Calu3 (cell line): ENCODE measurements at regions of chr6 and their contacts with region 1.

Region 1: DNA sequence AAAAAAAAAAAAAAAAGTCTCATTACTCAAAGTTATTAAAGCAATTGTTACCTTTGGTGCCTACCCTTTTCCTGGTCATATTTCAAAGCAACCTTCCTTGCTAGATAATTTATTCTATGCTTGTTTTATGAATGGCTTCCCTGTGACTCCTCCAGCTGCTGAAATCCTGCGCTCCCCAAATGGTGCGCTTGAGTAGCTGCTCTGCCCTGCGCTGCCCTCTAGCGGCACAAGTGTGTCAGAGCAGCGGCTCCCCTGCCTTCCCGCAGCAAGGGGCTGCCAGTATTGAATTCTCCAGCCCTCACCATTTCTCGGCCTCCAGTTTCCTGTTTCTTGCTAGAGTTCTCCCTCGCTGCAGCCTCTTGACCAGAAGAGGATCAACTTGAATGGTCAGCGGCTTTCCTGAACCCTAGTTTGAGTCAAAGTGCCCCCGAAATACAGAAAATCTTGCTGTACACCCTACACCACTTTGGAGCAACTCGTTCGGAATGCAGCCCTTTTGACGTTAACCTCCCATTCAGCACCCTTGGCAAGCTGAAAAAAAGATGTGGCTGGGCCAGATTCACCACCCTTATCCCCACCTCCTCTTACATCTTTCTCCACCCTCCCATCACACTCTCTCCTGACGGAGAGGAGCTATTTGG is 60.4 kb upstream of the KLHL31 start:
- DNase-seq: peak; percentile 83
- H3K4me3 Mint-ChIP-seq: peak overlapping the region; percentile 47
- H3K27ac Mint-ChIP-seq: peak overlapping the region; percentile 54
- H3K4me1 Mint-ChIP-seq: peaks cover 38% of the 10 kb centered on the region
- H3K27me3 Mint-ChIP-seq: no peaks in the 10 kb centered on the region
- CTCF ChIP-seq: peak; percentile 92

Region 2: DNA sequence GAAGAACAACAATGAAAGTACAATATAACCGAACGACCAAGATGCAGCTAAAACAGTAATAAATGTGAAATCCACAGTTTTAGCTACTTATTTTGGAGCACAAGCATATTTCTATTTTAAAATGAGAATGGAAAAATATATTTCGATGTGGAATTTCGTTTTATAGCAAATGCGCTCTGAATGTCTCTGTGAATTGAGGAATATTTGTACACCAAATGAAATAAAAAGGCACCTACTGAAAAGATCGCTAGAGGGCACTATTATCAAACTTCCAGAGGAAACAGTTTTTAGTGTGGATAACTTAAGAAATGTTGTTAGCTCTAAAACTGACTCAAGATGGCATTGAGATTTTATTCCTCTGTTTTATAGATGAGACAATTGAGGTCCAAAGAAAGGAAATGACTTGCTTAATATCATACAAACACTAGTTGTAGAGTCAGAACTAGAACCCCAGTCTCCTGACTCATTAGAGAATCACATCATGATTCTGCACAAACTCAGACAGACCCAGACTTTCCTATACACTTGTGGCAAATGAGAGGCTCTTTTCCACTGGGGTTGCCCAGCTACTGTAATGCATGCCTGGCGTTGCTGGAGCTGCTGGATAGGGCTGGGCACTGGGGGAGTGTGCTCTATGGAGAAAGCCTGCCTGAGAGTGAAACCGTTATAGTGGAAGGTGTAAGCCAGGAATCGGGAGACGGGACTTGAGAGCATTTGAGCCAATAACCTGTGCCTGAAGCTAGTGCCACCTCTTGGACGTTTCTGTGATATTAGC is 232.9 kb before region 1 on chr6:
- CTCF ChIA-PET with region 1: interaction called, 30 read pairs
- intact Hi-C with region 1: loop called (anchors 1 kb)
- DNase-seq: no peak
- H3K4me3 Mint-ChIP-seq: peak overlapping the region; percentile 30
- H3K27ac Mint-ChIP-seq: no peak overlapping the region
- H3K4me1 Mint-ChIP-seq: peaks cover 19% of the 10 kb centered on the region
- H3K27me3 Mint-ChIP-seq: no peaks in the 10 kb centered on the region
- CTCF ChIP-seq: peak; percentile 22

Region 3: DNA sequence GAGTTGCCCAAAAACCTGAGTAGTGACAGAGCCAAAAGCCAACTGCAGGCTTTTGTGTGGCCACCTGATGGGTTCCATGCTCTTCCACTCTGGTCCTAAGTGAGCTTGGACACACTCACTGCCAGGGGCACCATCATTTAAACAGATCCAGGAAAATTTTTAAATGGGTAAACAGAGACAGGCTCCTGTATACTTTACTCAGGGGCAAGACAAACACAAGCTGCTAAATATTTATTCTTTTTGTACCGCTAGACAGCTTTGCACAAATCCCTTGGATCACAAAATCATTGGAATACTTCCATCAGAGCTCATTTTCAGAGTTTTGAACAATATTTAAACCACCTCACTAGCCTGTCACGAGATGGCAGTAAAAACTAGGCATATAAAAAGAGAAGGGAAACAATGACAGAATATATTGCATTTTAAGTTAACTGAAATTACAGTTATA is 212.4 kb before region 1 on chr6:
- CTCF ChIA-PET with region 1: interaction called, 7 read pairs
- intact Hi-C with region 1: loop called (anchors 5 kb)
- DNase-seq: no peak
- H3K4me3 Mint-ChIP-seq: peak overlapping the region; percentile 39
- H3K27ac Mint-ChIP-seq: peak overlapping the region; percentile 23
- H3K4me1 Mint-ChIP-seq: peaks cover 68% of the 10 kb centered on the region
- H3K27me3 Mint-ChIP-seq: no peaks in the 10 kb centered on the region
- CTCF ChIP-seq: no peak

Region 4: DNA sequence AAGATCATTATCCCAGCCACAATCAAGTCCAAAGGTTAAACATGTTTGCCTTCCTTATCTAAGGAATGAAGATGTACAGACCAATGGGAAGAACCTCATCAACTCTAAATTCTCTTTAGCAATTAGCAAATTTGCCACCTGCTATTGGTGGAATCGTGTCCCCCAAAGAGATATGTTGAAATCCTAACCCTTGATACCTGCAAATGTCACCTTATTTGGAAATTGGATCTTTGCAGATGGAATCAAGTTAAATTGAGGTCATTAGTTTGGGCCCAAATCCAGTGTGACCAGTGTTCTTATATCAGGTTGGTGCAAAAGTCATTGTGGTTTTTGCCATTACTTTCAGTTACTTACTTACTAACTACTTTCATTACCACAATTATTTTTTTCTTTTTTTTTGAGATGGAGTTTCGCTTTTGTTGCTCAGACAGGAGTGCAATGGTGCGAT is 91.7 kb before region 1 on chr6:
- CTCF ChIA-PET with region 1: no interaction called
- intact Hi-C with region 1: no loop called
- DNase-seq: no peak
- H3K4me3 Mint-ChIP-seq: no peak overlapping the region
- H3K27ac Mint-ChIP-seq: no peak overlapping the region
- H3K4me1 Mint-ChIP-seq: peaks cover 23% of the 10 kb centered on the region
- H3K27me3 Mint-ChIP-seq: no peaks in the 10 kb centered on the region
- CTCF ChIP-seq: no peak

Region 5: GRCh38 chr6:53679446-53679933 is 46.4 kb before region 1 on chr6:
- CTCF ChIA-PET with region 1: interaction called, 4 read pairs
- intact Hi-C with region 1: loop called (anchors 1 kb)
- DNase-seq: peak; percentile 34
- H3K4me3 Mint-ChIP-seq: no peak overlapping the region
- H3K27ac Mint-ChIP-seq: peak overlapping the region; percentile 31
- H3K4me1 Mint-ChIP-seq: peaks cover 8% of the 10 kb centered on the region
- H3K27me3 Mint-ChIP-seq: no peaks in the 10 kb centered on the region
- CTCF ChIP-seq: peak; percentile 30

Region 6: DNA sequence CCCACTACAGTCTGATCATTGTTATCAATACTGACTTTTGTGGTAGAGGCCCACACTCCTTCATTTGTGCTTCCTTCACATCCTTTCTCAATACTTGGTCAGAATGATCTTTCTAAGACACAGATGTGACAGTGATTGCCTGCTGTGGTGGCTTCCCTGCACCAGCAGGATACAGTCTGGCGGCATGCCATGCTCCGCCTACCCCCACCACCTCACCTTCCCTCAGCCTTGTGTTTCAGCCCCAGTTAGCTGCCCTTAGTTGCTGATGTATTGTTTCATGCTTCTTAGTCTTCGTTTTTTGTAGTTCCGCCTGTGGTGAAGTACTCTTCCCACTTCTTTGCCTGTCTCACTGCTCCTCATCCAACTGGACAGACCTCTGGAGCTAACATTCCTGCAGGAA is 79.8 kb after region 1 on chr6:
- CTCF ChIA-PET with region 1: no interaction called
- intact Hi-C with region 1: no loop called
- DNase-seq: no peak
- H3K4me3 Mint-ChIP-seq: no peak overlapping the region
- H3K27ac Mint-ChIP-seq: no peak overlapping the region
- H3K4me1 Mint-ChIP-seq: peaks cover 19% of the 10 kb centered on the region
- H3K27me3 Mint-ChIP-seq: no peaks in the 10 kb centered on the region
- CTCF ChIP-seq: no peak

Region 7: DNA sequence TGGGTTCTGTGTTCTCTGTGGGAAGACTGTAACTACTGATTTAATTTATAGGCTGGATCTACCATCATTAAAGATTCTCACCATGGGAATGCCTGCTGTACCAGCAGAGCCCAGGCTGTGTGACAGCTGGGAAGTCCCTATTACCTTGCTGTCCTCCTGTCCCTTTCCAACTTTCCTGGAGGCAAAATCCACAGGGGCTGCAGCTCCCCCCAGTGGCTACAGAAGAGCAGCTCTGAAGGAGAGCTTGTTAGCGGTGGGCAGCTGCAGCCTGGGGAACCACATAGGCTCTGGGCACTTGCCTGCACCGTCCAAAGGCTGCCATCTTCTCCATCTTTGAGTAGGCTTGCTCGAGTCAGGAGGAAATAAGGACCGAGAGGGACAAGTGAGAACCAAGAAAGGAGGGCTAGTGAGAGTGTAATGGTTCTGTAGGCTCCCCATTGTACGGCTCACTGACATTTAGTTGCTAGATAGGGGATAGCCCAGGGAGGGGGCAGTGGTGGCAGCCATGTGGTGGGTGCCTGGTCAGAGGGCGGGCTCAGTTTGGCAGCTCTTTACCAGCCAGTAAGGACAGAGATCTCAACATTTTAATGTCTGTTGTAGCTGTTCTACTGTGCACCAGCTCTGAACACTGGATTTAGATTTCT is 230.3 kb after region 1 on chr6:
- CTCF ChIA-PET with region 1: interaction called, 26 read pairs
- intact Hi-C with region 1: no loop called
- DNase-seq: peak; percentile 86
- H3K4me3 Mint-ChIP-seq: no peak overlapping the region
- H3K27ac Mint-ChIP-seq: no peak overlapping the region
- H3K4me1 Mint-ChIP-seq: peaks cover 14% of the 10 kb centered on the region
- H3K27me3 Mint-ChIP-seq: no peaks in the 10 kb centered on the region
- CTCF ChIP-seq: peak; percentile 89